Ovary (tissue), 10 donors: ENCODE measurements at regions of chr10 and their contacts with region 1.

Region 1: DNA sequence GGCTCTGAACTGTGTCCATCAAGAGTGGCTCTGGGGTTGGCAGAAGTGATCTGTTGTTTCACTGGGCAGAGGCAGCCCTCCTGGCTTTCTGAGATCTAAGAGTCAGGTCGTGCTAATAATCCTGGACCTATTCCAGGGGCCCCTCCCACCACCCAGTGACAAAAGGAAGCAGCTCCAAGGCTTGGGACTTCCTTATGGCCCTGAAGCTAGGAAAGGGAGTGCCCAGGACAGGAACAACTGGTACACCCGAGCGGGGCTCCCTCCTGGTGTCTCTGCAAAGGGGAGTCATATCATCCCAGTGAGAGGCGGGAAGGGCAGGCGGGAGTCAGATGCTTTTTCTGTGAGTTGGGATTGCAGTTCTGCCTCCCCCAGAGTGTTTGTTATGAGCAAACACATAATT is 32.3 kb downstream of the RPS24 start:
- DNase-seq: no peak
- H3K4me3 ChIP-seq: no peak overlapping the region
- H3K27ac ChIP-seq: no peak overlapping the region
- H3K4me1 ChIP-seq: no peaks in the 10 kb centered on the region
- H3K27me3 ChIP-seq: no peaks in the 10 kb centered on the region
- CTCF ChIP-seq: no peak
- EP300 ChIP-seq: no peak
- POLR2A ChIP-seq: no peak

Region 2: GRCh38 chr10:78286186-78286585 is 220.2 kb after region 1 on chr10:
- intact Hi-C with region 1: loop called in 1 of 4 experiments (anchors 10 kb)
- DNase-seq: no peak
- H3K4me3 ChIP-seq: no peak overlapping the region
- H3K27ac ChIP-seq: no peak overlapping the region
- H3K4me1 ChIP-seq: no peaks in the 10 kb centered on the region
- H3K27me3 ChIP-seq: no peaks in the 10 kb centered on the region
- CTCF ChIP-seq: no peak
- EP300 ChIP-seq: no peak
- POLR2A ChIP-seq: no peak

Region 3: DNA sequence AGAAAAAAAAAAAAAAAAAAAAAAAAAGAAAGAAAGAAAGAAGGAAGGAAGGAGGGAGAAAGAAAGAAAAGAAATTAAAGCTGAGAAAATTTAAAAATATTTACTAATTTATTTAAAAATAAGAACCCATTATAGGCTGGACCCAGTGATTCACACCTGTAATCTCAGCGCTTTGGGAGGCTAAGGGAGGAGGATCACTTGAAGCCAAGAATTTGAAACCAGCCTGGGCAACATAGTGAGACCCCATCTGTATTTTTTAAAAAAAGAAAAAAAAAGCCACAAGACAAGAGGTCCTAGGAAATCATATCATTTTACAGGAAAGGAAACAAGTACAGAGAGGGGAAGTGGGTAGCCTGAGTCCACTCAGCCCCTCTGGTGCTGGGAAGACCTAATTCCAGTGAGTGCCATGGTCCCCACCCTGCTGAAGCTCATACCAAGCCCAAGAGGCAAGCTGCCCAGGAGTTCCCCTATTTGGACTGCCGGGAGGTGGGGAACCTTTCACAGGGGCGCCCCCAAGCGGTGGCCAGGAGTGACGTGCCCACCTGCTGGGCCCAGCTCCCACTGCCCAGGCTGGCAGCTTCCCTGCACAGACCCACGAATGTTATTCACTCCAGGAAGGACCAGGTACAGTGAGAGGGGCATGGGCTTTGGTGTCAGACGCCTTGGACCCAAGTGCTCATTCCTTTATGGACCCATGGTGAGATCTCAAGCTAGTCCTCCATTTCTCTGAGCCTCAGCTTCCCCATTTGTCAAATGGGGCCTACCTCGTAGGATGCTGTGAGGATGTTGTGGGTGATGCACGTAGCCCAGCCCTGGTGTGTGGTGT is 1136.4 kb after region 1 on chr10:
- intact Hi-C with region 1: loop called in 1 of 4 experiments (anchors 10 kb)
- DNase-seq: peak in 1 of 5 donors; percentile 69
- H3K4me3 ChIP-seq: no peak overlapping the region
- H3K27ac ChIP-seq: no peak overlapping the region
- H3K4me1 ChIP-seq: peaks cover 5% of the 10 kb centered on the region
- H3K27me3 ChIP-seq: no peaks in the 10 kb centered on the region
- CTCF ChIP-seq: peak in 2 of 3 donors; percentile 12 to 40
- EP300 ChIP-seq: no peak
- POLR2A ChIP-seq: no peak